ENCODE measurements at regions of chr19 and their contacts with region 1.

Region 1: GRCh38 chr19:17385878-17386611 is 8.0 kb downstream of the CCDC194 start:
- DNase-seq: peak; percentile 74
- ATAC-seq: peak; percentile 60

Region 2: GRCh38 chr19:17292286-17293097 is 93.6 kb before region 1 on chr19:
- intact Hi-C with region 1: loop called (anchors 10 kb)
- DNase-seq: peak; percentile 87
- ATAC-seq: peak; percentile 94

Region 3: GRCh38 chr19:17325897-17326598 is 60.0 kb before region 1 on chr19:
- intact Hi-C with region 1: no loop called
- DNase-seq: peak; percentile 79
- ATAC-seq: peak; percentile 53